Panc1 (cell line): ENCODE measurements at regions of chr7 and their contacts with region 1.

Region 1: DNA sequence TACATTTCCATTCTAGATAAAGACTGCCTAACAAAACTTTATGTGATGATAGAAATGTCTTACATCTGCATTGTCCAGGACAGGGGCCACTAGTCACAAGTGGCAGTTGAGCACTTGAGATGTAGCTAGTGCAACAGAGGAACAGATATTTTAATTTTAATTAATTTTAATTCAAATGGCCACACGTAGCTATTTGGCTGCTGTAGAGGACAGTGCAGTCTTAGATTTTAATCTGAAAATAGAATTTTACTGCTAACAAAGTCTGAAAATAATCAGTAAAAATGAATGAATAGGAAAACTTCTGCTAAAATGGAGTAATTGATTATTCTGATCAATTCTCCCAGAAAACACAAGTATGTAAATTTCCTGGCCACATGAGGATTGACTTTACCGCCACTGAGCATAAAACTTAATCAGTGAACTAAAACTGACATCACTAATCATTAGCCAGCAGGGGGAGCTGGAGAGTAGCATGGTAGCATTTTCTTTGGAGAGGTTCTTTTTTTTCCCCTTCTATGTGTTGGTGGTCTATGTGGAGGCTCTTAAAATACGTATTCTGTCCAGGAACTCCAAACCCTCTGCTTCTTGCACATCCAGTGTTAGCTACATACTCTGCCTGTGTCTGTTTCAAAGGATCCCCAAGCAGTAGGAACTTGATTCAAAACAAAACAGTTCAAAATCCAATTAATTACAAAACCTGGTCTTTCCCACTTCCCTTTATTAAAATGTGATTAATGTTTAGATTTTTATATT is 52.1 kb downstream of the TSPAN12 start:
- DNase-seq: peak; percentile 17
- ATAC-seq: no peak; the same call in 1 of the 2 replicates
- H3K4me3 ChIP-seq: no peak overlapping the region
- H3K27ac ChIP-seq: no peak overlapping the region
- H3K4me1 ChIP-seq: no peaks in the 10 kb centered on the region
- H3K27me3 ChIP-seq: no peaks in the 10 kb centered on the region
- CTCF ChIP-seq: peak; percentile 84

Region 2: DNA sequence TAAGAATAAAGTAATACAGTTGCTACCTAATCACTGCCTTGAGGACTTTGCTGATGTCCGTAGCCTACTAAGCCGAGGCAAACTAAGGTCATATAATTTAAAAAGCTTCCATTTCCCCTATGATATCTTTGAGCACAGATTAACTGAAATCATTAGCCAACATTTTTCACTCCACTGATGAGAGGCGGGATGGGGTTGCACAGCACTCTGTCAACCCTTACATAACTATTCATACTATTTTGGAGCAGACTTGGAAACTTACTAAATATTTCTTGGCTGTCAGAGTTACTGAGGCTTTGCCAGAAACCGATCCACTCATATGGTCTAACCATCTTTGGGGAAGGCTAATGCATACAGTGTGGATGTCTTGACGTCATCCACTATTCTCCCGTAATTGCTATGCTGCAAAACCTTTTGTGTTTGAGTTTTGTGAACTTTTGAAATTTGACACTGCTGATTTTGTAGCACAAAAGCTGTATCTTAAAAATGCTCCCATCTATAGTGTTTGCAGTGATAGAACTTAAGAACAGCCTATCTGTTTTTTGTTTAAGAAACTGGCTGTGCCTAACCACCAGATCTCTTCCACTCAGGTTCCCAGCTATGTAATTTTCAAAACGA is 196.6 kb before region 1 on chr7:
- CTCF ChIA-PET with region 1: no interaction called
- POLR2A ChIA-PET with region 1: no interaction called
- in situ Hi-C with region 1: no loop called
- intact Hi-C with region 1: no loop called
- DNase-seq: no peak
- ATAC-seq: no peak
- H3K4me3 ChIP-seq: no peak overlapping the region
- H3K27ac ChIP-seq: no peak overlapping the region
- H3K4me1 ChIP-seq: no peaks in the 10 kb centered on the region
- H3K27me3 ChIP-seq: no peaks in the 10 kb centered on the region
- CTCF ChIP-seq: no peak

Region 3: GRCh38 chr7:120941064-120941463 is 135.3 kb after region 1 on chr7:
- CTCF ChIA-PET with region 1: no interaction called
- POLR2A ChIA-PET with region 1: no interaction called
- in situ Hi-C with region 1: no loop called
- intact Hi-C with region 1: loop called (anchors 1 kb)
- DNase-seq: no peak
- ATAC-seq: no peak
- H3K4me3 ChIP-seq: no peak overlapping the region
- H3K27ac ChIP-seq: no peak overlapping the region
- H3K4me1 ChIP-seq: no peaks in the 10 kb centered on the region
- H3K27me3 ChIP-seq: peaks cover 9% of the 10 kb centered on the region
- CTCF ChIP-seq: peak; percentile 29; the same call in 1 of the 2 replicates

Region 4: GRCh38 chr7:121081327-121081936 is 275.6 kb after region 1 on chr7:
- CTCF ChIA-PET with region 1: no interaction called
- POLR2A ChIA-PET with region 1: no interaction called
- in situ Hi-C with region 1: no loop called
- intact Hi-C with region 1: loop called (anchors 1 kb)
- DNase-seq: peak; percentile 42
- ATAC-seq: peak; percentile 79
- H3K4me3 ChIP-seq: no peak overlapping the region
- H3K27ac ChIP-seq: no peak overlapping the region
- H3K4me1 ChIP-seq: no peaks in the 10 kb centered on the region
- H3K27me3 ChIP-seq: 0 out of 2 replicates have a peak, but pooled peaks cover 2% of the 10 kb centered on the region
- CTCF ChIP-seq: peak; percentile 70; the same call in 1 of the 2 replicates

Region 5: DNA sequence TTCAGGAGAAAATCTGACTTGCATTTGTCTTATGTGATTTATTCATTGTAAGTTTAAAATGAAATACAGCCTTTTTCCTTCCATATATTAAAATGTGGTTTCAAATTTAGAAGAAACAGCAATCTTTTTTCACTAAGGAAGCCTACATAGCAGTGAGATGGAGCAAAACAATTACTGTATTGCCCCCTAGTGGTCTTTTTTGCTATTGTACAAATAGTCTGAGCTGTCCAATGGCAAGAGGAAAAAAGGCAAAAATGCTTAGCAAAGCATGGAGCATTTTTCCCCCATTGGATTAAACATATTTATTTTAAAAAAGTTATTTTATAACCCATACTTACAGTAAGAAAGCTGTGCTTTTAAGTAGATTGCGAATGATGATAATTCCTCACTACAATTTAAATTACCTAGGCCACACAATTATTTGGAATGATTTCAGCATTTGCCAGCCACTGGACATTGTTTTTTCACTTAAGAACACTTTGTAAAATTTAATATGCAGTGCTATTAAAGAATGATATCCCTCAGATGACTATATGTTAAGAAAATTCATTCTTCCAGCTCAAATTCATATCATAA is 302.2 kb after region 1 on chr7:
- CTCF ChIA-PET with region 1: no interaction called
- POLR2A ChIA-PET with region 1: no interaction called
- in situ Hi-C with region 1: no loop called
- intact Hi-C with region 1: loop called (anchors 5 kb)
- DNase-seq: peak; percentile 55
- ATAC-seq: peak; percentile 90
- H3K4me3 ChIP-seq: no peak overlapping the region
- H3K27ac ChIP-seq: no peak overlapping the region
- H3K4me1 ChIP-seq: no peaks in the 10 kb centered on the region
- H3K27me3 ChIP-seq: peaks cover 18% of the 10 kb centered on the region
- CTCF ChIP-seq: peak; percentile 76; the same call in 1 of the 2 replicates